CD4-positive, alpha-beta T cell (primary cell): ENCODE measurements at regions of chr17 and their contacts with region 1.

Region 1: DNA sequence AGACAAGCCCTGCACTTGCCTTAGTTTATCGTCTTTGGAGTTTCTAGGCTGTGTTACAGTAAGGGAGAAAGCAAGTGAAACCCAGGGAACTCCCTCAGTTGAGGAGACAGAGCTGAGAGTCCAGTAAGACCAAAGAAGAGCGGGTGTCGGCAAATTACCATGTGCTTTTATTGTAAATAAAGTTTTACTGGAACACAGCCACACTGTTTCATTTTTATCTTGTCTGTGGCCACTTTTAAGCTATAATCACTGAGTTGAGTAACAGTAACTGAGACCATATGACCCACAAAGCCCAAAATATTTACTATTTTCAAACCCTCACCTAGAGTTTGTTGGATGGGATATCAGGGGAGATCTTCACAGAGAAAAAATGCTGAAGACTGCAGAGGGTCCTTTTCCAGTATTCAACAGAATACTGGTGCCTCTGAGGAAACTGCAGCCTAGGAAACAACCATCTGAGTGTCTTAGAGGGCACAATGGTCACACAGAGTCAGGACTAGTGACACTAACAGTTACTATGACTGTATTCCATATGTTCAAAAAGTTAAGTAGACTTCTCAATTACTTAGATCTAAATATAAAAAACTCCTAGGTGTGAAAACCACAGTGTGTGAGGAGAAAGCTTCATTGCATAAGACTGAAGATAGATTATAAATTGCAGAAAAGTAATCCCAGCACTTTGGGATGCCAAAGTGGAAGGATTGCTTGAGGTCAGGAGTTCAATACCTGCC is 351.1 kb upstream of the TBX2 start:
- DNase-seq: no peak
- ATAC-seq: no peak
- H3K4me3 ChIP-seq: no peak overlapping the region
- H3K4me3 Mint-ChIP-seq: no peak overlapping the region
- H3K27ac ChIP-seq: no peak overlapping the region
- H3K27ac Mint-ChIP-seq: no peak overlapping the region
- H3K4me1 ChIP-seq: no peaks in the 10 kb centered on the region
- H3K4me1 Mint-ChIP-seq: peaks cover 8% of the 10 kb centered on the region
- H3K27me3 ChIP-seq: no peaks in the 10 kb centered on the region
- H3K27me3 Mint-ChIP-seq: no peaks in the 10 kb centered on the region
- CTCF ChIP-seq: no peak

Region 2: GRCh38 chr17:60989379-60989778 is 59.2 kb before region 1 on chr17:
- CTCF ChIA-PET with region 1: no interaction called
- POLR2A ChIA-PET with region 1: no interaction called
- intact Hi-C with region 1: loop called in 1 of 2 experiments (anchors 10 kb)
- DNase-seq: no peak
- ATAC-seq: no peak
- H3K4me3 ChIP-seq: no peak overlapping the region
- H3K4me3 Mint-ChIP-seq: no peak overlapping the region
- H3K27ac ChIP-seq: no peak overlapping the region
- H3K27ac Mint-ChIP-seq: no peak overlapping the region
- H3K4me1 ChIP-seq: no peaks in the 10 kb centered on the region
- H3K4me1 Mint-ChIP-seq: no peaks in the 10 kb centered on the region
- H3K27me3 ChIP-seq: no peaks in the 10 kb centered on the region
- H3K27me3 Mint-ChIP-seq: no peaks in the 10 kb centered on the region
- CTCF ChIP-seq: no peak

Region 3: DNA sequence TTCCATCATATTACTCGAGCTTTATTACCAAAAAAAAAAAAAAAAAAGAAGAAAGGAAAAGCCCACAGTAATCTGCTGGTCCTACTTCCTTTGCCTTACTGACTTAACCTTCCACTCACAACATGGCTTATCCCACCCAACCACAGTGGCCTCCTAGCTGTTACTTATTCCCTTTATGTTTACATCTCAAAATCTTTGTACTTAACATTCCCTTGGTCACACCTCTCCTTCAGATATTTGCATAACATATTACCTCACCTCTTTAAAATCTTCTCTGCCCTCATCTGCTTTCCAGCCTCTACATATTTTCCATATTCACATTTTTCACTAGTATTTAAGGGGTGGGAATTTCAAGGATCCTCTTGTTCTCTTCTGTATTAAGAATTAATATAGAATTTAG is 24.1 kb after region 1 on chr17:
- CTCF ChIA-PET with region 1: no interaction called
- POLR2A ChIA-PET with region 1: no interaction called
- intact Hi-C with region 1: no loop called
- DNase-seq: no peak
- ATAC-seq: no peak
- H3K4me3 ChIP-seq: no peak overlapping the region
- H3K4me3 Mint-ChIP-seq: no peak overlapping the region
- H3K27ac ChIP-seq: no peak overlapping the region
- H3K27ac Mint-ChIP-seq: no peak overlapping the region
- H3K4me1 ChIP-seq: no peaks in the 10 kb centered on the region
- H3K4me1 Mint-ChIP-seq: no peaks in the 10 kb centered on the region
- H3K27me3 ChIP-seq: no peaks in the 10 kb centered on the region
- H3K27me3 Mint-ChIP-seq: no peaks in the 10 kb centered on the region
- CTCF ChIP-seq: no peak